ENCODE measurements at regions of chr20 and their contacts with region 1.

Region 1: GRCh38 chr20:38893565-38894090 is 32.6 kb upstream of the FAM83D start:
- H3K4me3 ChIP-seq: no peak overlapping the region
- H3K27ac ChIP-seq: no peak overlapping the region
- H3K4me1 ChIP-seq: 0 out of 2 replicates have a peak, but pooled peaks cover 2% of the 10 kb centered on the region
- CTCF ChIP-seq: peak; percentile 67; the same call in 1 of the 2 replicates

Region 2: DNA sequence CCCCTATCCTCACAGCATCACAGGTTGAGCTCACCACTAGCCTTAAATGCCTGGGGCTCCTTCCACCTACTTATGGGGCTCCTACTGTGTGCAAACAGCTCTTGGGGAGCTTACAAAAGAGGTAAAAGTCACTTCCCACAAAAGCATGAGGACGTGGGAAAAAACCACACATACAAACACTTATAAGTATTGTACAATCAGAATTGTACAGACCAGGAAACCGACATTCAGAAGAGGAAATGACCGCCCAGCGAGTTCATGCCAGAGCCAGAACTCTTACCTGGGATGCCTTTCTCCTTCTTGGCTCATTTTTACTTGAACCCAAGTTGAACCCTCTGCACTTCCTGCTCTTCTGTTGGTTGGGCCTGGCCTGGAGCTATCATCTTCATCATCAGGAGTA is 94.4 kb before region 1 on chr20:
- CTCF ChIA-PET with region 1: no interaction called
- POLR2A ChIA-PET with region 1: no interaction called
- H3K4me3 ChIP-seq: no peak overlapping the region
- H3K27ac ChIP-seq: no peak overlapping the region
- H3K4me1 ChIP-seq: no peaks in the 10 kb centered on the region
- CTCF ChIP-seq: no peak

Region 3: GRCh38 chr20:38859070-38859690 is 34.4 kb before region 1 on chr20:
- CTCF ChIA-PET with region 1: interaction called, 13 read pairs
- POLR2A ChIA-PET with region 1: no interaction called
- H3K4me3 ChIP-seq: no peak overlapping the region
- H3K27ac ChIP-seq: no peak overlapping the region
- H3K4me1 ChIP-seq: no peaks in the 10 kb centered on the region
- CTCF ChIP-seq: no peak

Region 4: GRCh38 chr20:38883081-38883980 is 10.3 kb before region 1 on chr20:
- CTCF ChIA-PET with region 1: interaction called, 22 read pairs
- POLR2A ChIA-PET with region 1: no interaction called
- H3K4me3 ChIP-seq: no peak overlapping the region
- H3K27ac ChIP-seq: no peak overlapping the region
- H3K4me1 ChIP-seq: no peaks in the 10 kb centered on the region
- CTCF ChIP-seq: no peak

Region 5: DNA sequence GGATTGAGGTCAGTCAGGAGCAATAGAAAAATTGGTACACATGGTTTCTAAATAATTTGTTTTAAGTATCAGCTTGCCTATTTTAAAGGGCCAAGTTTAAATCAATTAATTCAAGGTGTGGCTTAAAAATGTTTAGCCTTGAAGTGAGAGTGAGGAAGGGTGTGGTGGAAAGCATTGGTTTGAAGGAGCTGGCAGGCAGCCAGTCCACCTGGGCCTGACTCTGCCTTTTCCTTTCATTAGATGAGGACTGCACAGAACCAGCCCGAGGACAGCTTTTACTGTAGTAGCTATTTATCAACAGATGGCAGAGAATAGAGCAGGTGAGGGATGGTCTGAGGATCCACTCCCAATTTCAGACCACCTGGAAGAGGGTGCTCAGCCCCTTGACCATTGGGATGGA is 110.9 kb after region 1 on chr20:
- CTCF ChIA-PET with region 1: no interaction called
- POLR2A ChIA-PET with region 1: no interaction called
- H3K4me3 ChIP-seq: no peak overlapping the region
- H3K27ac ChIP-seq: no peak overlapping the region
- H3K4me1 ChIP-seq: no peaks in the 10 kb centered on the region
- CTCF ChIP-seq: no peak

Region 6: DNA sequence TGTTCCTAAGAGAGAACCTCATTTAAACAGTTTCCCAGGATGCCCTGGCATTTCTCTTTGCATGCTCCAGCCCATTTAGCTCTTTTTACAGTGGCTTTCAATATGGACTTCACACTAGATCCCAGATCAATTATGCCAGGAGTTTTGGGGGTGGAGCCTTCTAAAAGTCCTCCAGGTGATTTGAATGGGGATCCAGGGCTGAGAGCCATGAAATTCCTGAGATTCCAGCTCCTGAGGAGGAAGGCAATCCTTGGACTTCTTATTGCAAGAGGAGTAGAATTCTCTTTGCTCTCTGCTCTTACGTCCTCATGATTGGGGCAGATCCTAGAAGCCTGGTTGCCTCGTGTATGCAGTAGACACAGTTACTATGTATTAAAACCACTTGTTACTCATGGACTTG is 252.8 kb after region 1 on chr20:
- CTCF ChIA-PET with region 1: no interaction called
- POLR2A ChIA-PET with region 1: no interaction called
- H3K4me3 ChIP-seq: no peak overlapping the region
- H3K27ac ChIP-seq: no peak overlapping the region
- H3K4me1 ChIP-seq: no peaks in the 10 kb centered on the region
- CTCF ChIP-seq: no peak

Region 7: GRCh38 chr20:39176457-39176856 is 282.8 kb after region 1 on chr20:
- CTCF ChIA-PET with region 1: no interaction called
- POLR2A ChIA-PET with region 1: no interaction called
- H3K4me3 ChIP-seq: no peak overlapping the region
- H3K27ac ChIP-seq: no peak overlapping the region
- H3K4me1 ChIP-seq: no peaks in the 10 kb centered on the region
- CTCF ChIP-seq: no peak